K562 (cell line): ENCODE measurements at regions of chr20 and their contacts with region 1.

Region 1: GRCh38 chr20:58309575-58310290 is at the start of gene RAB22A:
- DNase-seq: peak; percentile 86 to 94 (median 94)
- ATAC-seq: peak; percentile 91
- H3K4me3 ChIP-seq: peak within 1 kb of the TSS; percentile 99
- H3K27ac ChIP-seq: peak within 1 kb of the TSS; percentile 88
- H3K4me1 ChIP-seq: peaks cover 3 to 12% of the 10 kb centered on the region in 2 experiments; a peak in 2 of 5 replicates
- H3K27me3 ChIP-seq: no peaks in the 10 kb centered on the region
- CTCF ChIP-seq: peak in 1 of 3 experiments; percentile 1; a peak in 1 of 6 replicates
- EP300 ChIP-seq: no peak
- POLR2A ChIP-seq: 0 out of 2 replicates have a peak, but pooled peaks have one; percentile 42
- RAD21 ChIP-seq: no peak; a peak in 1 of 4 replicates
- polyA plus RNA-seq, gene RAB22A: 1.1 to 1.9 TPM

Region 2: GRCh38 chr20:58251921-58252591 is 57.7 kb before region 1 on chr20:
- CTCF ChIA-PET with region 1: no interaction called
- POLR2A ChIA-PET with region 1: interaction called, 3 read pairs
- in situ Hi-C with region 1: no loop called
- intact Hi-C with region 1: loop called (anchors 2 kb)
- DNase-seq: peak; percentile 68 to 87 (median 79)
- ATAC-seq: peak; percentile 89
- H3K4me3 ChIP-seq: no peak overlapping the region
- H3K27ac ChIP-seq: peak overlapping the region; percentile 88
- H3K4me1 ChIP-seq: peaks cover 10 to 31% of the 10 kb centered on the region in 2 experiments; a peak in 4 of 5 replicates
- H3K27me3 ChIP-seq: no peaks in the 10 kb centered on the region
- CTCF ChIP-seq: no peak
- EP300 ChIP-seq: peak; percentile 83
- POLR2A ChIP-seq: no peak
- RAD21 ChIP-seq: peak in 1 of 2 experiments; percentile 23; a peak in 1 of 4 replicates

Region 3: GRCh38 chr20:58374906-58375791 is 65.4 kb after region 1 on chr20:
- CTCF ChIA-PET with region 1: no interaction called
- POLR2A ChIA-PET with region 1: no interaction called
- in situ Hi-C with region 1: no loop called
- intact Hi-C with region 1: loop called (anchors 5 kb)
- DNase-seq: no peak
- ATAC-seq: no peak
- H3K4me3 ChIP-seq: no peak overlapping the region
- H3K27ac ChIP-seq: peak overlapping the region; percentile 65; the same call in 2 of the 3 replicates
- H3K4me1 ChIP-seq: peaks cover 8 to 12% of the 10 kb centered on the region in 2 experiments
- H3K27me3 ChIP-seq: no peaks in the 10 kb centered on the region
- CTCF ChIP-seq: no peak
- EP300 ChIP-seq: no peak
- POLR2A ChIP-seq: no peak
- RAD21 ChIP-seq: no peak